Activated CD4-positive, alpha-beta T cell treated with anti-CD3 and anti-CD28 coated beads for 36 hours (primary cell): ENCODE measurements at regions of chr21 and their contacts with region 1.

Region 1: GRCh38 chr21:32834916-32835235 is 63.3 kb upstream of the PAXBP1 start:
- DNase-seq: no peak
- ATAC-seq: no peak
- H3K4me3 Mint-ChIP-seq: no peak overlapping the region
- H3K27ac Mint-ChIP-seq: no peak overlapping the region
- H3K4me1 Mint-ChIP-seq: peaks cover 2% of the 10 kb centered on the region
- H3K27me3 Mint-ChIP-seq: no peaks in the 10 kb centered on the region

Region 2: DNA sequence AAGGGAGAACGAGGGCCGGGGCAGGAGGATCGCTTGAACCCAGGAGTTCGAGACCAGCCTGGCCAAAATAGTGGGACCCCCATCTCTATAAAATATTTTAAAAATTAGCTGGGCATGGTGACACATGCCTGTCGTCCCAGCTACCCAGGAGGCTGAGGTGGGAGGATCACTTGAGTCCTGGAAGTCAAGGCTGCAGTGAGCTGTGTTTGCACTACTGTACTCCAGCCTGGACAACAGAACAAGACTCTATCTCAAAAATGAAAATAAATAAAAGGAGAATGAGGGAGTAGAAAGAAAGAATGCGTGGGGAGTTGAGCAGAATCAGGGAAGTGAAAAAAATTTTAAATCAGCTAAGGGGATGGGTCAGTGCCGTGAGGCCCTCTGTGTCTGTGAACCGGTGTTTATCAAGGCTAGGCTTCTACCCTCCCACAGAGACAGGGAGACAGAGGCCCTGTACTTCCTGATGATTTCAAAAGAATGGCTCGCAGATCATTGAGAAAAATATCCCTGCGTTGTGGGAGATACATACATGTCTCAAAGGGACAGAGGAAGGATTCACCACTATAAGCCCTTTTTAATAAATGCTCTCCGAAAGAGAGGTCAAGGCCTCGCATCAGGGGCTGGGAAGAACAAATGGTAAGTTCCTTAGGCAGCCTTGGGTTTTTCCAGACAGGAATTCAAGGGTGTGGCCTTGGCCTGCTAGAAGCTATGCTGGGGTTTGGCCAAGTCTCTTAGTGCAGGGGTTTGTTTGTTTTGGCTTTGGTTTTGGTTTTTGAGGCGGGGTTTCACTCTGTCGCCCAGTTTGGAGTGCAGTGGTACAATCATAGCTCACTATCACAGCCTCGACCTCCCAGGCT is 452.0 kb after region 1 on chr21:
- CTCF ChIA-PET with region 1: no interaction called
- POLR2A ChIA-PET with region 1: no interaction called
- intact Hi-C with region 1: loop called in 1 of 2 experiments (anchors 10 kb)
- DNase-seq: no peak
- ATAC-seq: no peak
- H3K4me3 Mint-ChIP-seq: no peak overlapping the region
- H3K27ac Mint-ChIP-seq: no peak overlapping the region
- H3K4me1 Mint-ChIP-seq: peaks cover 4% of the 10 kb centered on the region
- H3K27me3 Mint-ChIP-seq: no peaks in the 10 kb centered on the region

Region 3: GRCh38 chr21:33355355-33355754 is 520.5 kb after region 1 on chr21:
- CTCF ChIA-PET with region 1: no interaction called
- POLR2A ChIA-PET with region 1: no interaction called
- intact Hi-C with region 1: loop called in 1 of 2 experiments (anchors 10 kb)
- DNase-seq: no peak
- ATAC-seq: no peak
- H3K4me3 Mint-ChIP-seq: no peak overlapping the region
- H3K27ac Mint-ChIP-seq: peak overlapping the region; percentile 70
- H3K4me1 Mint-ChIP-seq: peaks cover 10% of the 10 kb centered on the region
- H3K27me3 Mint-ChIP-seq: no peaks in the 10 kb centered on the region